CD4-positive, alpha-beta memory T cell (primary cell): ENCODE measurements at regions of chr3 and their contacts with region 1.

Region 1: DNA sequence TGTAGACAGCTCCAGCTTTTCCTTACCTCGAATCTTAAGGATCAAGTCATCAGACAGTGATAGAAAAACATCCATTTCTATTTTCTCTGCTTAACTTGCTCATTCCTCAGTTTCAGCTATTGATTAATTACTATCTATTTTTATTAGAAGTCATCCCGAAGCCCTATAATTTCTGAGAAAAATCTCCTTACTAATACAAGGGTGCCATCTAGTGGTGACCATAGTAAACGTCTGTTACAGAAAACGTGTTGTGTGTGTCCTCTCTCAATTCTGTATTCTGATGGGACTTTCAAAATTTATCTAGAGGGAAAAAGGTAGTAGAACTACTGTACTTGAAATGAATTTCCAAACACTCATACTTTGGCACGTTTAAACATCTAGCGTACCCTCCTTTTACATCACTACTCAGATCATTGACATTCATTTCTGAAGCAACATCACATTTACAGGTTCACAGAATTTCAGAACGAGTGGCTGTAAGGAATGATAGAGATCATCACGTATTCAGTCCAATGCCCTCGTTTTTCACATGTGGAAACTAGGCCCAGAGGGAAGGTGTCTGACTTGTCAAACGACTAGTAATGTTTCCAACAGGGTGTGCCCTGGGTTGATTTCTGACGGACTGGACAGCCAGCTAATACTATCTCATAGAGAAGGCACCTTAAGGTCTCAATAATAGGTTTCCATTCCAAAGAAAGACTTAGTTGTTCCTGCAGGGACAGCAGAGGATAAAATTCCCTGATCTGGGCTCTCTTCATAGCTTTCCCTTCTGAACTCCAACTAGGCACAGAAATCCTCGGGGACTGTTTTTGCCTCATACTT is 25.6 kb downstream of the HACD2 start:
- DNase-seq: peak in 4 of 5 donors; percentile 46 to 53 (median 50)
- H3K4me3 ChIP-seq: no peak overlapping the region
- H3K4me3 Mint-ChIP-seq: no peak overlapping the region
- H3K27ac ChIP-seq: no peak overlapping the region
- H3K27ac Mint-ChIP-seq: no peak overlapping the region
- H3K4me1 ChIP-seq: no peaks in the 10 kb centered on the region
- H3K4me1 Mint-ChIP-seq: peaks cover 5 to 9% (median 9%) of the 10 kb centered on the region in 4 donors
- H3K27me3 ChIP-seq: no peaks in the 10 kb centered on the region
- H3K27me3 Mint-ChIP-seq: no peaks in the 10 kb centered on the region

Region 2: DNA sequence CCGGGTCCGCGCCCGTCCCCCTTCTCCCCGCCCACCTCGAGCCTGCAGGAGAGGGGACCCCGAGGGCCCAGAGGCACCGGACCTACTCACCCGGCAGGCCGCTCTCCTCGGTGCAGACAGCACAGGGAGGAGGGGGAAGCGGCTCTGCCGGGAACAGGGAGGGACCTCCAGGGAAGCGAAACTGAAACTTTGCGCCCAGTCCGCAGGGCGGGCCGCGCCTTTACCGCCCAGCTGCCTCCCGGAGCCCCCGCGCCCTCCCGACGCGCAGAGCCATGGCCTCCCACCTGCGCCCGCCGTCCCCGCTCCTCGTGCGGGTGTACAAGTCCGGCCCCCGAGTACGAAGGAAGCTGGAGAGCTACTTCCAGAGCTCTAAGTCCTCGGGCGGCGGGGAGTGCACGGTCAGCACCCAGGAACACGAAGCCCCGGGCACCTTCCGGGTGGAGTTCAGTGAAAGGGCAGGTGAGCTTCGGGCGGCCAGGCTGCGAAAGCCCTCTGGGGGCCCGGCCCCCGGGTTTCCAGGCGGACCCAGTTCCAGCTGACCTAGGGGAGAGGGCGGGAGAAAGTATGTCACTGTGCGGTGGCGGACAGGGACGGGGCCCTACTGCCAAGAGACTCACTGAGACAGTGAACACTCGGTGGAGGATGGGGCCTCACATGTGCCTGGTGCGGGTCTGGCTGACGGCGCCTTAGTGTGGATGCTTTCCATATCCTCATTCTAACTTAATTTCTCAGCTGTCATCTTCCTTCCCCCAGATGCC is 994.9 kb before region 1 on chr3 and contains the starts of genes DTX3L and PARP9:
- CTCF ChIA-PET with region 1: no interaction called
- POLR2A ChIA-PET with region 1: no interaction called
- intact Hi-C with region 1: loop called (anchors 2 kb)
- DNase-seq: peak; percentile 79 to 87 (median 81)
- H3K4me3 ChIP-seq: peak within 1 kb of the TSS; percentile 78 to 94
- H3K4me3 Mint-ChIP-seq: peak within 1 kb of the TSS; percentile 92 to 98 (median 96)
- H3K27ac ChIP-seq: peak within 1 kb of the TSS; percentile 95
- H3K27ac Mint-ChIP-seq: peak within 1 kb of the TSS; percentile 90 to 99 (median 97)
- H3K4me1 ChIP-seq: peaks cover 70% of the 10 kb centered on the region
- H3K4me1 Mint-ChIP-seq: peaks cover 55 to 85% (median 70%) of the 10 kb centered on the region in 4 donors
- H3K27me3 ChIP-seq: no peaks in the 10 kb centered on the region
- H3K27me3 Mint-ChIP-seq: no peaks in the 10 kb centered on the region
- total RNA-seq, gene DTX3L: 49.3 to 51.0 TPM
- total RNA-seq, gene PARP9: 24.0 to 26.0 TPM

Region 3: DNA sequence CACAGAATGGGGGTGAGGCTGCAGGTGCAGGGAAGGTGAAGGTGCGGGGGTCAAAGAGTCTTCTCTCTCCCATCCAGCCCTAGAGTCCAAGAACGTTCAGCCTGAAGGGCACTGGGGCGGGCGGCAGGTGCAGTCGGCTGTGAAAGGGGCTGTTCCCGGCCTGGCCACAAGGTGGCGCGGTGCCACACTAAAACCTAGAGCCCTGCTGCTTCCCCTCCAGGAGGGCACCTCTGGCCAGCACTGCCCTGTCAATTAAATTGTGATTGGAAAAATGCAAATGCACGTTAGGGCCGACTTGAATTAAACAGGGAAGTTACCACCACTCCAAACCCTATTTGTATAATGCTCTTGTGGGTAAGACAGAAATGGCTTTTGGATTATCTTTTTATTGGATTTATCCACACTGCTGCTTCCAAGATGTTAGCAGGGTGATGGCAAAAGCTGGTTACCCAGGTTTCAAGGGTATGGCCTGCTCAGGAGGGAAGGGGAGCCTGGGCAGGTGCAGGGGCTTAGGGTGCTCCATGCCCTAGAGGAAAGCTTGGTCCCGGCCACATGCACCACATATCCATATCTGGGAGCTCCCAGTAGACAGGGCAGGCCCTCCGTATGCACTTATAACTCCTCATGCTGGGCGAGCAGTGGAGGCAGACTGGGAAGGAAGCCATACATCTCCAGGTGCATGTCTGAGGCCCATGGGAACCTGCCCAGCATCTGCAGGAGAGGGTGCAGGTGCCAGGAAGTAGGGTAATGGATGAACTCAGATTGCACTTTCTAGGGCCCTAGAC is 230.2 kb before region 1 on chr3:
- CTCF ChIA-PET with region 1: interaction called, 137 read pairs
- POLR2A ChIA-PET with region 1: no interaction called
- intact Hi-C with region 1: no loop called
- DNase-seq: peak in 4 of 5 donors; percentile 56 to 62 (median 60)
- H3K4me3 ChIP-seq: no peak overlapping the region
- H3K4me3 Mint-ChIP-seq: no peak overlapping the region
- H3K27ac ChIP-seq: no peak overlapping the region
- H3K27ac Mint-ChIP-seq: no peak overlapping the region
- H3K4me1 ChIP-seq: no peaks in the 10 kb centered on the region
- H3K4me1 Mint-ChIP-seq: peaks cover 0 to 1% (median 0%) of the 10 kb centered on the region in 4 donors
- H3K27me3 ChIP-seq: no peaks in the 10 kb centered on the region
- H3K27me3 Mint-ChIP-seq: peaks cover 0 to 1% of the 10 kb centered on the region in 2 donors

Region 4: GRCh38 chr3:123449102-123449996 is 109.9 kb before region 1 on chr3:
- CTCF ChIA-PET with region 1: interaction called, 4 read pairs
- POLR2A ChIA-PET with region 1: no interaction called
- intact Hi-C with region 1: loop called (anchors 2 kb)
- DNase-seq: no peak
- H3K4me3 ChIP-seq: peak overlapping the region in 1 of 2 donors; percentile 32
- H3K4me3 Mint-ChIP-seq: peak overlapping the region in 1 of 8 donors; percentile 70
- H3K27ac ChIP-seq: no peak overlapping the region
- H3K27ac Mint-ChIP-seq: no peak overlapping the region
- H3K4me1 ChIP-seq: no peaks in the 10 kb centered on the region
- H3K4me1 Mint-ChIP-seq: peaks cover 2 to 18% (median 6%) of the 10 kb centered on the region in 4 donors
- H3K27me3 ChIP-seq: peaks cover 10% of the 10 kb centered on the region
- H3K27me3 Mint-ChIP-seq: peaks cover 27 to 42% of the 10 kb centered on the region in 2 donors

Region 5: GRCh38 chr3:123535580-123535979 is 23.7 kb before region 1 on chr3:
- CTCF ChIA-PET with region 1: interaction called, 15 read pairs
- POLR2A ChIA-PET with region 1: no interaction called
- intact Hi-C with region 1: no loop called
- DNase-seq: no peak
- H3K4me3 ChIP-seq: no peak overlapping the region
- H3K4me3 Mint-ChIP-seq: no peak overlapping the region
- H3K27ac ChIP-seq: no peak overlapping the region
- H3K27ac Mint-ChIP-seq: no peak overlapping the region
- H3K4me1 ChIP-seq: no peaks in the 10 kb centered on the region
- H3K4me1 Mint-ChIP-seq: peaks cover 0 to 13% (median 11%) of the 10 kb centered on the region in 4 donors
- H3K27me3 ChIP-seq: no peaks in the 10 kb centered on the region
- H3K27me3 Mint-ChIP-seq: no peaks in the 10 kb centered on the region

Region 6: GRCh38 chr3:123571264-123571972 is 12.2 kb after region 1 on chr3:
- CTCF ChIA-PET with region 1: interaction called, 21 read pairs
- POLR2A ChIA-PET with region 1: no interaction called
- intact Hi-C with region 1: no loop called
- DNase-seq: no peak
- H3K4me3 ChIP-seq: no peak overlapping the region
- H3K4me3 Mint-ChIP-seq: no peak overlapping the region
- H3K27ac ChIP-seq: no peak overlapping the region
- H3K27ac Mint-ChIP-seq: peak overlapping the region in 3 of 7 donors; percentile 35 to 71 (median 47)
- H3K4me1 ChIP-seq: no peaks in the 10 kb centered on the region
- H3K4me1 Mint-ChIP-seq: peaks cover 0 to 11% (median 6%) of the 10 kb centered on the region in 4 donors
- H3K27me3 ChIP-seq: no peaks in the 10 kb centered on the region
- H3K27me3 Mint-ChIP-seq: no peaks in the 10 kb centered on the region

Region 7: DNA sequence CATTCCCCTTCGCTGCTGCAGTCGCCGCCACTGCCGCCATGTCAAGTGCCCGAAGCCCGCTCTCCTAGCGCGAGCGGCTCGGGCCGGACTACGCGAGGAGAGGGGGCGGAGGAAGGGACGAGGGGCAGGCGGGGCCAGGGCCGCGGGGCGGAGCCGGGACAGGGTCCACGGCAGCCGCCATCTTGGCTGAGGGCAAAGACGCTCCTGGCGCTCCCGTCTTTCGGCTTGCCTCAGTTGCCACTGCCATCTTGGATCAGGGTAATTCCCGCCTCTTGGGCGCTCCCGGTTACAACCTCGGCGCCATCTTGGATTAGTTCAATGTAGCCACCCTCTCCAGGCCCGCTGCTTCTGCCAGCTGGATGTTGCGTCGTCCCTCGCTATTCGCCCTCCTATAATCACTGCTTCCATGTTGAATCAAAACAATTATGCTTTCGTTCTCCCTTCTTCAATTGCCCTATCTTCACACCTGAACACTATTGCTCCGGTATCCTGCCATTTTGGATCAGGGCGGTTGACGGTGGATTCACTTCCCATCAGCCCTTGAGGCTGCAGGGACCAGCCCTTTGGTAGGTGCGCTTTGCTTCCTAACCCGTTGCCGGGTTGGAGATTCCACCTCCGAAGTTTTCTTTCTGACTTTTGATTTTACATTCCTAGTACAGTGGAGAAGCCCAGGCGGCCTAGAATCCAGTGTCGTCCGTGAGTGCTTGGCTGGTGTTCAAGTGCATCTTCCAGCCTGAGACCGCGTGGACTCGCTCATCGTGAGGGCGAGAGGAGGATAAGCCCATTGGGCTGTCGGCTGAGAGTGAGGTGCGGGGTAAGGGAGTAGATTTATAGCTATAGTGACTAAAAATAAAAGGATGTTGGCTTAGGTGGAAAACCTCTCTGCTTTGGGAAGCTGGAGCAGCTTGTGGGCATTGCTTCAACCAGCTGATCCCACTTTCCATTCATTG is 26.0 kb after region 1 on chr3 and contains the start of gene HACD2:
- CTCF ChIA-PET with region 1: interaction called, 10 read pairs
- POLR2A ChIA-PET with region 1: no interaction called
- intact Hi-C with region 1: no loop called
- DNase-seq: peak; percentile 90 to 96 (median 92)
- H3K4me3 ChIP-seq: peak within 1 kb of the TSS; percentile 80 to 99
- H3K4me3 Mint-ChIP-seq: peak within 1 kb of the TSS in 5 of 8 donors; percentile 88 to 93 (median 92)
- H3K27ac ChIP-seq: peak within 1 kb of the TSS; percentile 78
- H3K27ac Mint-ChIP-seq: peak within 1 kb of the TSS in 6 of 7 donors; percentile 76 to 94 (median 87)
- H3K4me1 ChIP-seq: peaks cover 38% of the 10 kb centered on the region
- H3K4me1 Mint-ChIP-seq: peaks cover 20 to 28% (median 22%) of the 10 kb centered on the region in 4 donors
- H3K27me3 ChIP-seq: no peaks in the 10 kb centered on the region
- H3K27me3 Mint-ChIP-seq: no peaks in the 10 kb centered on the region
- total RNA-seq, gene HACD2: 26.0 to 29.5 TPM